Head of caudate nucleus (tissue), 42 donors: ENCODE measurements at regions of chr3 and their contacts with region 1.

Region 1: DNA sequence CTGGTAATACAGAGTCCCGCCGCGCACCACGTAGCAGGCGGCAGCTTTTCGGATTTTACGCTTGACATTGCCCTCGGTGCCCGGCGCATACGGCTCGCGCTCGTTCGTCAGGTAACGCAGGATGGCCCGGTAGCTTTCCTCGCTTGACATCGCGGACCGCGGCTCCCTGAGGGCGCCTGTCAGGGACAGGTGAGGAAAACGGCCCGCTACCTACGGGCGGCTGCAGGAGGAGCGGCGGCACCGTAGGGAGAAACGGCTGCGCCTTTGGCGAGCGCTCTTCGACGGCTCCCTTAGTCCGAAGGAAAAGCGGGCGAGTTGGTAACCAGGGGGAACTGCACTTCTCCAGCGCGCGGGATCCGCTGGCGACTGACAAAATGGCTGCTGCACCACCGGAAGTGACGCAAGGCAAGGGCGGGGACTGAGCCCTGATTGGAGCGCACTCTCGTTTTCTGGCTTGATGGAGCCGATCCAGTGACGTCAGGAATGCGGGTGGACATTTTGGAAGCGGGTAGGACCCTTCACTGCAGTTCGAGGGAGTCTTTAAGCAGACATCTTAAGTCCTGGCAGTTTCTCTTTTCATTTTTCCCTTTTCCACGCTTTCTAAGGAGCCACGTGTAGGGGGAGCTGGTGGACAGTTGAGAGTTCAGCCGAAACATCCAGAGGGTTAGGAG is at the start of gene ZBTB11:
- DNase-seq: peak; percentile 98 to 100 (median 100)

Region 2: DNA sequence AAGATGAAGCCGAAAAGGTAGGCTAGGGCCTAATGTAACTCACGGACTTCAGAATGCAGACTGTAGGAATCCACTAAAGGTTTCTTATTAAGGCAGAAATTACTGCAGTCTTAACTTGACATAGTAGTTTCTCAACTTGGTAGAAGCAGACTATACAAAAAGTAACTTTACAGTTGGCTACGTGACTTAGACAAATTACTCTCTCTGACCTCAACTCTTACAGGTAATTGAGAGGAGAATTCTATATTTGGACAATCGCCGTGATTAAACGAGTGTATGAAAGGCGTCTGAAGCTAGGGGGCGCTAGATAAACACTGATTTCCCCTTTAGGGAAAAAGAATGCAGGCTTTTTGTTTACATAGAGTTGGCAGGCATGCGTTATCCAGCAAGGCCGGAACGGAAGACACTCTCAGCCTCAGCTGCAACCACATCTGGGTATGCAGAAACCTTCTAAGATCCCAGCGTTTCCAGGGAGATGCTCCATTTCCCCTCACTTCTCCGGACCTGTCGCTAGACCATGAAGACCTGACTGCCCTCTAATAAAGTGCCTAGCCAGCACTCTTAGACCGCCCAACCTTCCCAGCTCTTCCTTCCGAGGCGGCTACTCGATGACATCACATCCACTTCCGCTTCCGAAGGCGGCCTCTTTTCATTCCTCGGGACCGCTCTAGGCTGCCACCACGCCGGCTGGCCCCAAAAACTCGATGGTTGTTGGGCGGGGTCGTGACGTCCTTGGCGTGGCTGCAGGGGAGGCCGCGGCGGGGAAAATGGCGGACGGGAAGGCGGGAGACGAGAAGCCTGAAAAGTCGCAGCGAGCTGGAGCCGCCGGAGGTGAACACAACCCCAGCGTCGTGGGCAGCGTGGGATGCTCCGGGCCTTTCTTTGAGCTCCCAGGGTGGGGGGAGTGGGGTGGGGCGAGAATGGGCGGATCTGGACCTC is 103.2 kb before region 1 on chr3 and contains the start of gene PCNP:
- intact Hi-C with region 1: no loop called
- DNase-seq: peak; percentile 98 to 100 (median 99)

Region 3: GRCh38 chr3:101779047-101779821 is 102.3 kb after region 1 on chr3 and contains the start of gene NXPE3:
- intact Hi-C with region 1: no loop called
- DNase-seq: peak; percentile 94 to 99 (median 98)

Region 4: GRCh38 chr3:101849051-101849720 is 172.3 kb after region 1 on chr3 and contains the start of gene NFKBIZ:
- intact Hi-C with region 1: loop called (anchors 5 kb)
- DNase-seq: peak; percentile 76 to 96 (median 91)